ENCODE measurements at regions of chr6 and their contacts with region 1.

Region 1: GRCh38 chr6:1381481-1382330 is 7.7 kb upstream of the FOXF2 start:
- DNase-seq: no peak

Region 2: GRCh38 chr6:593139-593906 is 788.4 kb before region 1 on chr6:
- intact Hi-C with region 1: loop called in 1 of 2 experiments (anchors 5 kb)
- DNase-seq: no peak

Region 3: DNA sequence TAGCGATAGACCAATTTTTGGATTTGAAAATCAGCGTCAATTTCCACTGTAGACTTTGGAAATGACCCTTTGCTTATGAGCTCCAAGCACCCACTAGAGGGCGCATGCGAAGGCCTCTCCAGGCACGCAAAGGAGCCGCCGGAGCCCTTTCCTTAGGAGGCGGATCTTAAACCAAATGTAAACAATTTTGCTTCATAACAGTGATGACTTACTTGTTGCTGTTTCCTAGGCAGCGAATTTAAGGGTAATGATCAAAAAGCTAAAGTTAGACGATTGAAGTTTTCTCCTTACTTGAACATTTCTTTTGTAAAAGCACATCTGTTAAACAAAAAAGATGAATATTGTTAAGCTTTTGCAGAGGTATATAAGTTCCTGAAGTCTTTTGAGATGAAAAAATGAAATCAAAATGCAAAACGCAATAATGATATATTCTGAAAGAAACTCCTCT is 659.6 kb before region 1 on chr6:
- intact Hi-C with region 1: loop called in 1 of 2 experiments (anchors 10 kb)
- DNase-seq: peak; percentile 89

Region 4: GRCh38 chr6:797479-798077 is 584.1 kb before region 1 on chr6:
- intact Hi-C with region 1: loop called (anchors 5 kb)
- DNase-seq: no peak

Region 5: DNA sequence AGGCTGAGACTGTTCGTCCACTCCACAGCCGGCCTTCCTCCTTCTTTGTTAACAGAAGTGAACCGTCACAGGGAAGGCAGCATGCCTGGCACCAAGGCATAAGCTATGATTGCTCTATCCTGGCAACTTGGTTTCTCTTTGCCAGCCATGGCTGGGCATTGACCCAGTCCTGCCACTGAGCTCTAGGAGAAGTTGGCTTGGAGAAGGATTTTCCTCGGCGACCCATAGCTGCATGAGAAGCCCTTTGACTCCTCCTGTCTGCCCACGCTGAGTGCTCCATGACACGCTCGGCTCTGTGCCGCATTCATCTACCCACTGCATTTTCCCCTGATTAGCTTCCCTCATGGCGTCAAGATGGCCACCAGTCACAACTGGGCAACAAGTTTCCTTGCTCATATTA is 576.9 kb before region 1 on chr6:
- intact Hi-C with region 1: loop called (anchors 5 kb)
- DNase-seq: no peak

Region 6: GRCh38 chr6:912871-913835 is 468.6 kb before region 1 on chr6:
- intact Hi-C with region 1: loop called in 1 of 2 experiments (anchors 10 kb)
- DNase-seq: no peak

Region 7: DNA sequence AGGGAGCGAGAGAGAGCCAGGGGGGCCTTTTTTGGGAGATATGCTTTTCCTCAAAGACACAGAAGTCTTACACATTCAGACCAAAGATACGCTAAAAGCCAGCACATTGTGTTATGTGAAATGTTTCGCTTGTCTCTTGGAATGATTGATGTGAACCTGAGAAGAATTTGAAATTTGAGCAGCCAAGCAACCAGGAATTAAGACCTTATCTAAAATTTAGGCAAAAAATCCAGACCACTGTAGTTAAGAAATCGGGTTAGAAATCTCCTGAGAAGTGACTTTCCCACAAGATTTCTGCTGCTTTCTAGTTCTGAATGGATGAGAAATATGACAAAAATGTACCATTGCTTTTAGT is 1086.9 kb after region 1 on chr6:
- intact Hi-C with region 1: loop called in 1 of 2 experiments (anchors 5 kb)
- DNase-seq: no peak

Measured in posterior vena cava (tissue), 2 donors.